ENCODE measurements at regions of chr1 and their contacts with region 1.

Region 1: GRCh38 chr1:45359882-45360513 is 19.8 kb upstream of the MUTYH start:
- DNase-seq: peak; percentile 71
- ATAC-seq: peak; percentile 69
- H3K4me3 Mint-ChIP-seq: no peak overlapping the region
- H3K27ac Mint-ChIP-seq: no peak overlapping the region
- H3K4me1 Mint-ChIP-seq: peaks cover 5% of the 10 kb centered on the region
- H3K27me3 Mint-ChIP-seq: no peaks in the 10 kb centered on the region

Region 2: GRCh38 chr1:45291716-45292115 is 68.3 kb before region 1 on chr1:
- CTCF ChIA-PET with region 1: no interaction called
- DNase-seq: no peak
- ATAC-seq: no peak
- H3K4me3 Mint-ChIP-seq: no peak overlapping the region
- H3K27ac Mint-ChIP-seq: no peak overlapping the region
- H3K4me1 Mint-ChIP-seq: no peaks in the 10 kb centered on the region
- H3K27me3 Mint-ChIP-seq: peaks cover 6% of the 10 kb centered on the region

Region 3: DNA sequence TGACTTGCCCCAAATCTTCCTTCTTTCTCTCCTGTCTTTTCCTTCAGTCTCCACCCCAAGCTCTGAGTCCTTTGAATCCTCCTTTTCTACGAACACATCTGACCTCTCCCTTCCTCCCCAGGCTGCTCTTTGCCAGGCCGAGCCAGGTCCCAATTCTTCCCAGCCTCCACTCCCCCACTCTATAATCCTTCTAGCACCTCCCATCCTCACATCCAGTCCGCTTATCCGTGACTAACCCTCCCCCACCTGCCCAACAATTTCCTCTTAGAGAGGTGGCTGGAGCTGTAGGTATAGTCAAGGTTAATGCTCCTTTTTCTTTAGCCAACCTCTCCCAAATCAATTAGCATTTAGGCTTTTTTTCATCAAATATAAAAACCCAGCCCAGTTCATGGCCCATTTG is 42.8 kb before region 1 on chr1:
- CTCF ChIA-PET with region 1: no interaction called
- DNase-seq: no peak
- ATAC-seq: no peak
- H3K4me3 Mint-ChIP-seq: no peak overlapping the region
- H3K27ac Mint-ChIP-seq: no peak overlapping the region
- H3K4me1 Mint-ChIP-seq: no peaks in the 10 kb centered on the region
- H3K27me3 Mint-ChIP-seq: peaks cover 2% of the 10 kb centered on the region

Region 4: GRCh38 chr1:45348716-45349677 is 11.0 kb before region 1 on chr1:
- CTCF ChIA-PET with region 1: no interaction called
- DNase-seq: no peak
- ATAC-seq: no peak
- H3K4me3 Mint-ChIP-seq: no peak overlapping the region
- H3K27ac Mint-ChIP-seq: no peak overlapping the region
- H3K4me1 Mint-ChIP-seq: peaks cover 24% of the 10 kb centered on the region
- H3K27me3 Mint-ChIP-seq: no peaks in the 10 kb centered on the region

Region 5: GRCh38 chr1:45375104-45376090 is 15.4 kb after region 1 on chr1:
- CTCF ChIA-PET with region 1: interaction called, 11 read pairs
- DNase-seq: no peak
- ATAC-seq: no peak
- H3K4me3 Mint-ChIP-seq: no peak overlapping the region
- H3K27ac Mint-ChIP-seq: no peak overlapping the region
- H3K4me1 Mint-ChIP-seq: peaks cover 18% of the 10 kb centered on the region
- H3K27me3 Mint-ChIP-seq: no peaks in the 10 kb centered on the region

Region 6: GRCh38 chr1:45499415-45499769 is 139.4 kb after region 1 on chr1:
- CTCF ChIA-PET with region 1: interaction called, 163 read pairs
- DNase-seq: peak; percentile 51
- ATAC-seq: peak; percentile 3
- H3K4me3 Mint-ChIP-seq: peak overlapping the region; percentile 95
- H3K27ac Mint-ChIP-seq: peak overlapping the region; percentile 93
- H3K4me1 Mint-ChIP-seq: peaks cover 39% of the 10 kb centered on the region
- H3K27me3 Mint-ChIP-seq: no peaks in the 10 kb centered on the region